ENCODE measurements at regions of chr12 and their contacts with region 1.

Region 1: GRCh38 chr12:89244536-89244935 is 107.8 kb downstream of the DUSP6 start:
- DNase-seq: peak; percentile 45
- H3K4me3 Mint-ChIP-seq: peak overlapping the region; percentile 32
- H3K27ac Mint-ChIP-seq: peak overlapping the region; percentile 84
- H3K4me1 Mint-ChIP-seq: peaks cover 53% of the 10 kb centered on the region
- H3K27me3 Mint-ChIP-seq: no peaks in the 10 kb centered on the region

Region 2: DNA sequence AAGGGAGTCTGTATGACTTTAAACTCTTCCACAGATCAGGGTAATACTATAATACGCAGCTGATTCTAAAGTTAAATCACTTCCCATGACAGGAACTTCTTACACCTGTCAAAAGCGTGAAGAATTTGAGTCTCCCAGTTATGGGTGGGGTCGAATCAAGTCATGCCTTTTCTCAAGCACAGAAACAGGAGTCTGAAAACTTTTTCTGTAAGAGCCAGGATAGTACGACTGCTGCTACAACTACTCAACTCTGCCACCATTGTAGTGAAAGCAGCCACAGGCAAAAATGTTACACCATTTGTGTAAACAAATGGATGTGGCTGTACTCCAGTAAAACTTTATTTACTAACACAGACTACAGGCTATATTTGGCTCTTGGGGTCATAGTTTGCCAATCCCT is 17.4 kb after region 1 on chr12:
- intact Hi-C with region 1: loop called (anchors 1 kb)
- DNase-seq: no peak
- H3K4me3 Mint-ChIP-seq: no peak overlapping the region
- H3K27ac Mint-ChIP-seq: no peak overlapping the region
- H3K4me1 Mint-ChIP-seq: peaks cover 34% of the 10 kb centered on the region
- H3K27me3 Mint-ChIP-seq: no peaks in the 10 kb centered on the region

Region 3: DNA sequence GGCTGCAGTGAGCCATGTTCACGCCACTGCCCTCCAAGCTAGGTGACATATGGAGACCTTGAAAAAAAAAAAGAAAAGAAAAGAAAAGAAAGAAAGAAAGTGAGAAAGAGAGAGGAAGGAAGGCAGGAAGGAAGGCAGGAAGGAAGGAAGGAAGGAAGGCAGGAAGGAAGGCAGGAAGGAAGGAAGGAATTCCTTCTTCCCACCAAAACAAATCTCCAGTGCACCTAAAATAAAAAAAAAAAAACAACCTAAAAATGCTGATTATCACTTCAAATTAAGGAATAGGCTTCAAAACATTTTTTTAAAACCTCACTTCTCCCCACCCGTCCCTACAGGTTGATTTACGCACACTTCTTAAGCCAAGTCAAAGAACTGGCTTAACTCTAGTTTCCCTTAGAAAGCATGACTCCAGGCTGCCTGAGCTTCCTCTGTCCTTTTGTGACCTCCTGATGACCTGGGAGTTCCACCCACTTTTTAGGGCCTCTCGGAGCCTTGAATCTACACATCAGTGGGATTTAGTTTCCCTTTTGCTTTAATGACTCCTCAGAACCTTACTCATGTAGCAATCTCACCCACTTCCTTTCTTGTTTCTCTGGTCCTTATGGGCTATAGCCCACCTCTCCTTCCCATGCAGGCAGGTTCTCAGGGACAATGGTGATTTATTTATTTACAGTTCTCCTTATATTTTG is 89.2 kb after region 1 on chr12:
- intact Hi-C with region 1: loop called (anchors 5 kb)
- DNase-seq: no peak
- H3K4me3 Mint-ChIP-seq: peak overlapping the region; percentile 46
- H3K27ac Mint-ChIP-seq: peak overlapping the region; percentile 76
- H3K4me1 Mint-ChIP-seq: peaks cover 26% of the 10 kb centered on the region
- H3K27me3 Mint-ChIP-seq: no peaks in the 10 kb centered on the region

Region 4: GRCh38 chr12:89461649-89462612 is 217.4 kb after region 1 on chr12:
- intact Hi-C with region 1: loop called (anchors 1 kb)
- DNase-seq: no peak
- H3K4me3 Mint-ChIP-seq: peak overlapping the region; percentile 60
- H3K27ac Mint-ChIP-seq: peak overlapping the region; percentile 36
- H3K4me1 Mint-ChIP-seq: peaks cover 43% of the 10 kb centered on the region
- H3K27me3 Mint-ChIP-seq: no peaks in the 10 kb centered on the region

Region 5: GRCh38 chr12:89494411-89495231 is 250.1 kb after region 1 on chr12:
- intact Hi-C with region 1: loop called (anchors 1 kb)
- DNase-seq: peak; percentile 16
- H3K4me3 Mint-ChIP-seq: peak overlapping the region; percentile 50
- H3K27ac Mint-ChIP-seq: peak overlapping the region; percentile 92
- H3K4me1 Mint-ChIP-seq: peaks cover 34% of the 10 kb centered on the region
- H3K27me3 Mint-ChIP-seq: no peaks in the 10 kb centered on the region

Measured in activated T-helper 1 cell treated with anti-CD3 and anti-CD28 coated beads, Interleukin-12 subunit alpha, Interleukin-12 subunit beta, Interleukin-2, Interleukin-4 antibody, amounts not matched to agents 30 ng/mL and 10 ng/mL and 1 ng/mL, durations not matched to agents 14 hours and 24 hours and 36 hours (primary cell).